ENCODE measurements at regions of chr17 and their contacts with region 1.

Region 1: DNA sequence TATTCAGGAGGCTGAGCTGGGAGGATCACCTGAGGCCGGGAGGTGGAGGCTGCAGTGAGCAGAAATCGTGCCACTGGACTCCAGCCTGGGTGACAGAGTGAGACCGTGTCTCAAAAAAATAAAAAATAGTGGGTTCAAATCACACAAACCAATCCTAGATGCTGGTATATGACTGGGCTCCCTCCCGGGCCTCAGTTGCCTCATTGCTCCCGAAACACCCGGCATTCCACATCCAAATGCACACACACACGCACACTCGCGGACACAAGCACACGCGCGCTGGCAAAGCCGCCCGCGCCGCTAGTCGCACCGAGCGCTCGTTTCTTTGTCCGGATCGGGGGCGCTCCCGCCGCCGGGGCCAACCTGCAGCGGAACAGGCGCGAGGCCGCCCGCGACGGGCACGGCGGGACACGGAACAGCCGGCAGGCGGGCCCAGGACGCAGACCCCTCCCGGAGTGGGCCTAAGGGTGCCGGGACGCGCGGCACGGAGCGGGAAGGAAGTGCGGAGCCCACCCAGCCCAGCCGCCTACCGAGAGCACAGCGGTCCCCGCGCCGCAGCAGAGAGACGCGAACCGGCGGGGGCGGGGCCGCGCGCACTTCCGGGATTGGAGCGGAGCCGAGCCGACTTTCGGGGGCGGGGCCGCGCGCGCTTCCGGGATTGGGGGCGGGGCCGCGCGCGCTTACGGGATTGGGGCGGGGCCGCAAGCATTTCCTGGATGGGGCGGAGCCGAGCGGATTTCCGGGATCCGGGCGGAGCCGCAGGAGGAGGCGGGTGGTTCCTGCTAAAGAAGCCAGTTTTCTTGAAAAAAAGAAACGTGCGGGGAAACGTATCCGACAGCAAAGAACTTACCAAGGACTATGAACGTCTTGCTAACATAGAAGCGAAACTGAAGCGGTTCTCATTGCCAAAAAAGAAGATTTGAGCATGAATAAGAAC is at the start of gene CYBC1:
- DNase-seq: peak; percentile 91 to 96 (median 94)
- H3K4me3 ChIP-seq: peak within 1 kb of the TSS; percentile 97
- H3K4me3 Mint-ChIP-seq: peak within 1 kb of the TSS; percentile 90 to 99 (median 95)
- H3K27ac ChIP-seq: peak within 1 kb of the TSS; percentile 92
- H3K27ac Mint-ChIP-seq: peak within 1 kb of the TSS; percentile 92 to 100 (median 98)
- H3K4me1 ChIP-seq: peaks cover 29% of the 10 kb centered on the region
- H3K4me1 Mint-ChIP-seq: peaks cover 29 to 45% (median 33%) of the 10 kb centered on the region in 3 donors
- H3K27me3 ChIP-seq: no peaks in the 10 kb centered on the region
- H3K27me3 Mint-ChIP-seq: no peaks in the 10 kb centered on the region
- total RNA-seq, gene CYBC1: 184 to 189 TPM

Region 2: DNA sequence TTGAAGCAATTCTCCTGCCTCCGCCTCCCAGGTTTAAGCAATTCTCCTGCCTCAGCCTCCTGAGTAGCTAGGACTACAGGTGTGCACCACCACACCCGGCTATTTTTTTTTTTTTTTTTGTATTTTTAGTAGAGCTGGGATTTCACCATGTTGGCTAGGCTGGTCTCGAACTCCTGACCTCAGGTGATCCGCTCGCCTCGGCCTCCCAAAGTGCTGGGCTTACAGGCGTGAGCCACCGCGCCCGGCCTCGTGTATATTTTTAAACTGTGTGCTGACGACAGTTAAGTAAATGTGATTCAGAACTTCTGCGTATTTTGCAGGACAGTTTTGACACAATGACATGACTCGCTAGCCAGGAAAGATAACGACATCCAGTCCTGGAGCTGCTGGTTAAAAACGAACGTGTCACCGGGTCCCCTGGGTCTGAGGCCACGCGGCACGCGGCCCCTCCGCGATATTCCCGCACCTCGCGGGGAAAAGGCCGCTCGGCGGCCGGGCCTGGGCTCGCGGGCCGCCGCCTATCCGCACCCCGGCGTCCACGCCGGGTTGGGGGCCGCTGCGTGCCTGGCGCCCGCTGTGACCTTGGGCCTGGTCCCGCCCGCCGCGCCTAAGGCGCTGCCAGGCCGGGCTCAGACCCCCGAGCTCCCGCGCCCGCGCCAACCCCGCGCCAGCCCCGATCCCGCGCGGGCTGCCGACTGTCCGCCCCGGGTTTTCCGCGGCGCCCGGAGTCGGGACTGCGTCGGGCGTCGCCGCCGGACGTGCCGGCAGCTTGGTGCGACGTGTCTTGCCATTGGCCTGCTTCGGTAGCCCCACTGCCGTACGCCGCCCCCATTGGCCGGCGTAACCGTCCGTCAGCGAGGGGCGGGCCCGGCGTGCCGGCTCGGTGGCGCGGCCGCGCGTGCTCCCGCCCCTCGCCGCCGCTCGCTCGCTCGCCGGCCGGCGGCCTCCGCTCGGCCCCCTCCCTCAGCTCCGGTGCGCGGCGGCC is 68.7 kb after region 1 on chr17 and contains the start of gene FOXK2:
- CTCF ChIA-PET with region 1: no interaction called
- POLR2A ChIA-PET with region 1: interaction called, 12 read pairs
- DNase-seq: peak; percentile 91 to 96 (median 94)
- H3K4me3 ChIP-seq: peak within 1 kb of the TSS; percentile 62
- H3K4me3 Mint-ChIP-seq: peak within 1 kb of the TSS; percentile 85 to 97 (median 93)
- H3K27ac ChIP-seq: peak within 1 kb of the TSS; percentile 84
- H3K27ac Mint-ChIP-seq: peak within 1 kb of the TSS; percentile 84 to 97 (median 90)
- H3K4me1 ChIP-seq: peaks cover 13% of the 10 kb centered on the region
- H3K4me1 Mint-ChIP-seq: peaks cover 20 to 32% (median 32%) of the 10 kb centered on the region in 3 donors
- H3K27me3 ChIP-seq: no peaks in the 10 kb centered on the region
- H3K27me3 Mint-ChIP-seq: no peaks in the 10 kb centered on the region
- total RNA-seq, gene FOXK2: 63.9 to 71.2 TPM

Measured in CD8-positive, alpha-beta memory T cell (primary cell).